H1 (cell line): ENCODE measurements at regions of chr12 and their contacts with region 1.

Region 1: DNA sequence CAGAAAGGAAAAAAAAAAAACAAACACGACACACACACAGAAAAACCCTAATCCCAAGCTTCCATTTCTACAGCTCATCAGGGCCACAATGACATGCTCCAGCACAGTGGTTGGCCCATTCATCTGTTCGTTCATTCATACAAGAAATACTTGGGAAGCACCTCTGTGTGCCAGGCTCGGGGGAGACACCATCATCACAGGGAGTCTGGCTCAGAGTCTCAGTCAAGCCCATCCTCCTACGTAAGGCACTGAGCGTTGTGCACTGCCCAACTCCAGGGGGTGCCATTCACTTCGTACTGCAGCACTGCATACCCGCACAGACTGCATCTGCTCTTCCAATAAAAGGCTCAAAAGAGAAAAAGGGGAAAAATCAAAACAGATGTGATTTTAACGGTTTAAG is 15.3 kb downstream of the VPS37B start:
- DNase-seq: no peak
- H3K4me3 ChIP-seq: no peak overlapping the region
- H3K27ac ChIP-seq: no peak overlapping the region
- H3K4me1 ChIP-seq: peaks cover 0 to 2% (median 0%) of the 10 kb centered on the region in 4 experiments; a peak in 1 of 7 replicates
- H3K27me3 ChIP-seq: peaks cover 2 to 38% (median 35%) of the 10 kb centered on the region in 4 experiments
- CTCF ChIP-seq: peak; percentile 37 to 59 (median 59)
- EP300 ChIP-seq: no peak
- POLR2A ChIP-seq: no peak
- RAD21 ChIP-seq: peak; percentile 47 to 59

Region 2: GRCh38 chr12:122865268-122866231 is 15.1 kb before region 1 on chr12:
- CTCF ChIA-PET with region 1: interaction called, 36 read pairs
- POLR2A ChIA-PET with region 1: interaction called, 3 read pairs
- DNase-seq: no peak
- H3K4me3 ChIP-seq: no peak overlapping the region
- H3K27ac ChIP-seq: no peak overlapping the region
- H3K4me1 ChIP-seq: no peaks in the 10 kb centered on the region
- H3K27me3 ChIP-seq: peaks cover 16 to 34% (median 29%) of the 10 kb centered on the region in 4 experiments
- CTCF ChIP-seq: peak; percentile 17 to 42 (median 42); a peak in 3 of 4 replicates
- EP300 ChIP-seq: no peak
- POLR2A ChIP-seq: no peak
- RAD21 ChIP-seq: peak; percentile 9 to 11; a peak in 2 of 4 replicates

Region 3: GRCh38 chr12:122951979-122952892 is 71.6 kb after region 1 on chr12:
- CTCF ChIA-PET with region 1: interaction called, 41 read pairs
- POLR2A ChIA-PET with region 1: interaction called, 7 read pairs
- DNase-seq: peak in 1 of 2 experiments; percentile 73
- H3K4me3 ChIP-seq: no peak overlapping the region
- H3K27ac ChIP-seq: no peak overlapping the region
- H3K4me1 ChIP-seq: no peaks in the 10 kb centered on the region
- H3K27me3 ChIP-seq: no peaks in the 10 kb centered on the region
- CTCF ChIP-seq: peak; percentile 94 to 97 (median 95)
- EP300 ChIP-seq: no peak
- POLR2A ChIP-seq: no peak
- RAD21 ChIP-seq: peak; percentile 96 to 98